MCF 10A (cell line): ENCODE measurements at regions of chr22 and their contacts with region 1.

Region 1: GRCh38 chr22:38347897-38348750 is 30.9 kb upstream of the CSNK1E start:
- DNase-seq: peak; percentile 72
- H3K4me3 Mint-ChIP-seq: no peak overlapping the region
- H3K27ac Mint-ChIP-seq: peak overlapping the region; percentile 81
- H3K4me1 Mint-ChIP-seq: peaks cover 14% of the 10 kb centered on the region
- H3K27me3 Mint-ChIP-seq: no peaks in the 10 kb centered on the region
- CTCF ChIP-seq: no peak

Region 2: GRCh38 chr22:38298312-38299000 is 49.7 kb before region 1 on chr22:
- CTCF ChIA-PET with region 1: interaction called, 4 read pairs
- POLR2A ChIA-PET with region 1: no interaction called
- intact Hi-C with region 1: loop called (anchors 2 kb)
- DNase-seq: peak; percentile 100
- H3K4me3 Mint-ChIP-seq: peak overlapping the region; percentile 45
- H3K27ac Mint-ChIP-seq: peak overlapping the region; percentile 98
- H3K4me1 Mint-ChIP-seq: peaks cover 42% of the 10 kb centered on the region
- H3K27me3 Mint-ChIP-seq: no peaks in the 10 kb centered on the region
- CTCF ChIP-seq: peak; percentile 50

Region 3: DNA sequence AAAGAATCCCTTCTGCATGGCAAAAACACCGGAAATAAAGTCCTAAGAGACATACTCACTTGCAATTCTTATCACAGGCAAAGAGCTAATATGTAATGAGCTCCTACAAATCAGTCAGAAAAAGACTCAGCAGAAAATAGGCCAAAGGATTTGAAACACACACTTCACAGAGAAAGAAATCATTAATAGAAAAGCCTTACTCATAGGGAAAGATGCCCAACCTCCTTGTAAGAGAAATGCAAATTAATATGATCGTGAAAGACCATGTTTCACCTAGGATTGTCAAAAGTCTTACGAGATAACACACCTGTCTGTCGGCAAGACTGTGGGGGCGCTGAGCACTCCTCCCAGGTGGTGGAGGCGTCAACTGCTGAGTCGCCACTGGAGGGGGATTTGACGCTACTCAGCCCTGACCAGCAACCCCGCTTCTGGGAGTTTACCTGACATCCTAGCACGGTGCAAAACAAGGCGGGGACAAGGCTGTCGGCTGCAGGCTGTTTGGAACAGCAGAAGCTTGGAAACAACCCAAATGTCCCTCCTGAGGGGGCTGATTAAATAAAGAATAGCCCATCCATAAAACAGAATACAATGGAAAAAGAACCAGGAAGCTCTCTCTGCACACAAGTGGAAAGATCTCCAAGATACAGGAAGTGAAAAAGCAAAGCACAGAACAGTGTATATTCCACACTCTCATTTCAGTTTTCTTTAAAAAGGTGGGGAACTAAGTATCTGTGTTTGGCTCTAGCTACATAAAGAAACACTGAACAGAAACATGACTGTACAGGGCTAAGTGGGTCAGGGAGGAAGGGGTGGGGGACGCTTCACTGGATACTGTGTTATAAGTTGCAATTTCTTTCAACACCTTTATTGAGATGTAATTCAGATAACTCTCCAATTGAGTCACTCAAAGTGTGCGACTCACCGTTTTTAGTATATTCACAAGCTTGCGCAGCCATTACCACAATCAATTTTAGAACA is 42.4 kb before region 1 on chr22:
- CTCF ChIA-PET with region 1: no interaction called
- POLR2A ChIA-PET with region 1: interaction called, 23 read pairs
- intact Hi-C with region 1: no loop called
- DNase-seq: peak; percentile 53
- H3K4me3 Mint-ChIP-seq: peak overlapping the region; percentile 38
- H3K27ac Mint-ChIP-seq: peak overlapping the region; percentile 98
- H3K4me1 Mint-ChIP-seq: peaks cover 64% of the 10 kb centered on the region
- H3K27me3 Mint-ChIP-seq: no peaks in the 10 kb centered on the region
- CTCF ChIP-seq: no peak